Mammary epithelial cell (primary cell): ENCODE measurements at regions of chr16 and their contacts with region 1.

Region 1: DNA sequence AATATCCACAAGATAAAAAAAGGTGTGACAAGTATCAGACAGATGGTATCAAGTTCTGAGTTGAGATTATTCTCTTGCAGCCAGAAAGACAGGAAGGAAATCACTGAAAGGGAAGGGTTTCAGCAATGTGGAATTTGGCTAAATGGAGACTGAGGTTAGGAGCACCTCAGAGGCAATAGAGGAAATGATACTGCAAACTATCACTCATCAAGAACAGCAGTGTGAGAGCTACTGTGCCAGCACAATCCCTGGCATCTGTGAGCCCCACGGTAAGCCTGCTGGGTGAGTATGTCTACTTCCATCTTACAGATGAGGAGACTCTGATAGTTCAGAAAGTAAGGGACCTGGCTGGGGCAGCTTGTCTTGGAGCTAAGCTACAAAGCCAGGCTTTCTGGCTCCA is 162.0 kb downstream of the SALL1 start:
- DNase-seq: no peak
- H3K4me3 ChIP-seq: no peak overlapping the region
- H3K27ac ChIP-seq: no peak overlapping the region
- H3K4me1 ChIP-seq: peaks cover 4% of the 10 kb centered on the region
- H3K27me3 ChIP-seq: no peaks in the 10 kb centered on the region
- CTCF ChIP-seq: no peak

Region 2: GRCh38 chr16:51048544-51048943 is 59.5 kb after region 1 on chr16:
- CTCF ChIA-PET with region 1: no interaction called
- dilution Hi-C with region 1: loop called (anchors 5 kb)
- in situ Hi-C with region 1: no loop called
- intact Hi-C with region 1: no loop called
- DNase-seq: peak; percentile 24
- H3K4me3 ChIP-seq: no peak overlapping the region
- H3K27ac ChIP-seq: no peak overlapping the region
- H3K4me1 ChIP-seq: no peaks in the 10 kb centered on the region
- H3K27me3 ChIP-seq: no peaks in the 10 kb centered on the region
- CTCF ChIP-seq: no peak